PC-3 (cell line): ENCODE measurements at regions of chr14 and their contacts with region 1.

Region 1: DNA sequence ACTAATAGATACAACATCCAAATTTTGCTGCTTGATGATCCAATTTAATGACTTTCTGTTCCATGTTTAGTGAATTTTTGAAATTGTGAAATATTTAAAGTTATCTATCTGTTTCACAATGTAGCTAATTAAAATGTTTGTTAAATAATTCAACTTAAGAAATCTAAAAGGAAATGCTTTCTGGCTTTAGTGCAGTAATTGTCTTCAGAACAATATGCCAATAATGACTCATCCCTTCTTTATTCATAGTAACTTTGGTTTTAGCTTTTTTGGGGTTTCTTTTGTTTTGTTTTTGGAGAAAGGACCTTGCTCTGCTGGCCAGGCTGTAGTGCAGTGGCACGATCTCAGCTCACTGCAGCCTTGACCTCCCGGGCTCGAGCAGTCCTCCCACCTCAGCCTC is 479.2 kb upstream of the RGS6 start:
- DNase-seq: no peak
- ATAC-seq: no peak
- H3K4me3 ChIP-seq: no peak overlapping the region
- H3K27ac ChIP-seq: no peak overlapping the region
- H3K4me1 ChIP-seq: peaks cover 65% of the 10 kb centered on the region
- H3K27me3 ChIP-seq: no peaks in the 10 kb centered on the region
- CTCF ChIP-seq: no peak

Region 2: DNA sequence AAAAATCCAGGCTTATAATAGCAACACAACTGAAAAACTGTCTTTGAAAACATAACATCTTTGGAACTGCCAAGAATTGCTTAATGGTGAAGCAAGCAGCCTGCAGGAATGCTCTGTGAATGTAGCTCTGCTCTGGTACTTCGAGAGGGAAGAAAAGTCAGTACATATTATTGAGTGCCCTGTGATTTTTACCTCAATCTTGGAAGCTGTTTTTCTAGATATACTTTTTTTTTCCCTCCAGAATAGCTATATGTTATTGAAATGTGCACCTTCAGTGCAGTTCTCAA is 37.6 kb before region 1 on chr14:
- CTCF ChIA-PET with region 1: no interaction called
- POLR2A ChIA-PET with region 1: no interaction called
- intact Hi-C with region 1: loop called (anchors 1 kb)
- DNase-seq: no peak
- ATAC-seq: no peak
- H3K4me3 ChIP-seq: no peak overlapping the region
- H3K27ac ChIP-seq: peak overlapping the region; percentile 52; the same call in 1 of the 2 replicates
- H3K4me1 ChIP-seq: peaks cover 23% of the 10 kb centered on the region
- H3K27me3 ChIP-seq: no peaks in the 10 kb centered on the region
- CTCF ChIP-seq: no peak

Region 3: DNA sequence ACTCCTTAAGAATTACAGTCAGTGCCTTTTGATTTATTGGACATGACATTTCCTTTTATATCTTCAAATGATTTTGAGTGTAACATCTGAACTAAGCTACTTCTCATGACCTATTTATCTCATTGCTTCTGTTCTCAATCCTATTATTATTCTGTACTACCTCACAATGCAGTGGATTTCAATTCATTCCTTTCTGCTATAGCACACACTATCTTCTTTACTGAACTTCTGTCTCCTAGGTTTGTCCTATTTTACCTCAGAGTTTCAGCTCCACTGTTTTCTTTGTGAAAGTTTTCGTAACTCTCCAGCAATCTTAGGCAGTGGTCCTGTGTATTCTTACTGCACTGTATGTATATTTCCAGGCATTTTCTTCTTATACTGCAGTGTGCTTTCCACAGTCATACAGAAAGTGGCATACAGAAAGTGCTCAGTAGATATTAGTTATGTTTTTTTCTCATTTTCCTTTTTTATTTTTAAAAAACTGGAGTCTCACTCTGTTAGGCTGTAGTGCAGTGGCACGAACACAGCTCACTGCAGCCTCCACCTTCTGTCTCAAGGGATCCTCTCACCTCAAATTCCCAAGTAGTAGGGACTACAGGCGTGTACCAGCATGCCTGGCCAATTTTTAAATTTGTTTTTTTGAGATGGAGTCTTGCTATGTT is 110.6 kb after region 1 on chr14:
- CTCF ChIA-PET with region 1: no interaction called
- POLR2A ChIA-PET with region 1: no interaction called
- intact Hi-C with region 1: no loop called
- DNase-seq: no peak
- ATAC-seq: no peak
- H3K4me3 ChIP-seq: no peak overlapping the region
- H3K27ac ChIP-seq: no peak overlapping the region
- H3K4me1 ChIP-seq: no peaks in the 10 kb centered on the region
- H3K27me3 ChIP-seq: no peaks in the 10 kb centered on the region
- CTCF ChIP-seq: no peak

Region 4: GRCh38 chr14:71574976-71575375 is 122.0 kb after region 1 on chr14:
- CTCF ChIA-PET with region 1: no interaction called
- POLR2A ChIA-PET with region 1: interaction called, 5 read pairs
- intact Hi-C with region 1: loop called (anchors 2 kb)
- DNase-seq: peak; percentile 89
- ATAC-seq: peak; percentile 90
- H3K4me3 ChIP-seq: peak overlapping the region; percentile 13; the same call in 1 of the 2 replicates
- H3K27ac ChIP-seq: no peak overlapping the region
- H3K4me1 ChIP-seq: peaks cover 30% of the 10 kb centered on the region
- H3K27me3 ChIP-seq: no peaks in the 10 kb centered on the region
- CTCF ChIP-seq: no peak

Region 5: DNA sequence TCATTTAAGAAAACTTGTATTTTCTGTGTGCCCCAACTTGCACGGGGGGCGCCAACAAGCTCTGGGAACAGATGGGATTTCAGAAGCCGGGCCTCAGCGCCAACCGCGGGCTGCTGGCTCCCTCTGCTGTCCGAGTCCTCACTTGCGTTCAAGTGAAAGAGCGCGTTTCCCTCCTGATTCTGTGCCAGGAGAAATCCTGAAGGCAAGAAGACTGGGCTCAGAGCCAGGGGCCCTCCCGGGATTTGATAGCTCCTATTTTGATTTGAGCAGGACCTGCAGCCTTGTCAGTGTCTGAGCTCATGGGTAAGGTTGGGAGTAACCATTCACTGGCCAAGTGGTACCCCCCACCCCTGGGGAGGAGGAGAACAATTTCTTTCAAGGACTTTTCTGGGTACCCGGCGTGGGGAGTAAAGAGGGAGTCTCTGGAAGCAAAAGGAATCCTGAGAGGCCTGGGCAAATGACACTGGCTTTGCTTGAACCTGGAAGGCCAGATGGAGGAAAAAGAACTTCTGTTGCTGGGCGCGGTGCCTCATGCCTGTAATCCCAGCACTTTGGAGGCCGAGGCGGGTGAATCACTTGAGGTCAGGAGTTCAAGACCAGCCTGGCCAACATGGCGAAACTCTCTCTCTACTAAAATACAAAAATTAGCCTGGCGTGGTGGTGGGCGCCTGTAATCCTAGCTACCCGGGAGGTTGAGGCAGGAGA is 300.3 kb after region 1 on chr14:
- CTCF ChIA-PET with region 1: no interaction called
- POLR2A ChIA-PET with region 1: no interaction called
- intact Hi-C with region 1: loop called (anchors 5 kb)
- DNase-seq: peak; percentile 94
- ATAC-seq: peak; percentile 85
- H3K4me3 ChIP-seq: peak overlapping the region; percentile 46; the same call in 1 of the 2 replicates
- H3K27ac ChIP-seq: no peak overlapping the region
- H3K4me1 ChIP-seq: peaks cover 5% of the 10 kb centered on the region
- H3K27me3 ChIP-seq: no peaks in the 10 kb centered on the region
- CTCF ChIP-seq: peak; percentile 98